ENCODE measurements at regions of chr17 and their contacts with region 1.

Region 1: GRCh38 chr17:49997791-49998703 is 3.0 kb upstream of the DLX3 start:
- DNase-seq: peak; percentile 89
- ATAC-seq: peak; percentile 85
- H3K4me3 Mint-ChIP-seq: no peak overlapping the region
- H3K27ac Mint-ChIP-seq: no peak overlapping the region
- H3K4me1 Mint-ChIP-seq: peaks cover 22% of the 10 kb centered on the region
- H3K27me3 Mint-ChIP-seq: peaks cover 71% of the 10 kb centered on the region
- CTCF ChIP-seq: peak; percentile 95

Region 2: GRCh38 chr17:49815761-49816281 is 182.2 kb before region 1 on chr17:
- CTCF ChIA-PET with region 1: interaction called, 11 read pairs
- POLR2A ChIA-PET with region 1: no interaction called
- intact Hi-C with region 1: no loop called
- DNase-seq: no peak
- ATAC-seq: no peak
- H3K4me3 Mint-ChIP-seq: no peak overlapping the region
- H3K27ac Mint-ChIP-seq: peak overlapping the region; percentile 75
- H3K4me1 Mint-ChIP-seq: peaks cover 62% of the 10 kb centered on the region
- H3K27me3 Mint-ChIP-seq: no peaks in the 10 kb centered on the region
- CTCF ChIP-seq: no peak

Region 3: GRCh38 chr17:49880291-49881053 is 117.6 kb before region 1 on chr17:
- CTCF ChIA-PET with region 1: interaction called, 145 read pairs
- POLR2A ChIA-PET with region 1: no interaction called
- intact Hi-C with region 1: loop called (anchors 5 kb)
- DNase-seq: peak; percentile 82
- ATAC-seq: peak; percentile 100
- H3K4me3 Mint-ChIP-seq: peak overlapping the region; percentile 24
- H3K27ac Mint-ChIP-seq: no peak overlapping the region
- H3K4me1 Mint-ChIP-seq: peaks cover 3% of the 10 kb centered on the region
- H3K27me3 Mint-ChIP-seq: peaks cover 32% of the 10 kb centered on the region
- CTCF ChIP-seq: peak; percentile 99

Region 4: DNA sequence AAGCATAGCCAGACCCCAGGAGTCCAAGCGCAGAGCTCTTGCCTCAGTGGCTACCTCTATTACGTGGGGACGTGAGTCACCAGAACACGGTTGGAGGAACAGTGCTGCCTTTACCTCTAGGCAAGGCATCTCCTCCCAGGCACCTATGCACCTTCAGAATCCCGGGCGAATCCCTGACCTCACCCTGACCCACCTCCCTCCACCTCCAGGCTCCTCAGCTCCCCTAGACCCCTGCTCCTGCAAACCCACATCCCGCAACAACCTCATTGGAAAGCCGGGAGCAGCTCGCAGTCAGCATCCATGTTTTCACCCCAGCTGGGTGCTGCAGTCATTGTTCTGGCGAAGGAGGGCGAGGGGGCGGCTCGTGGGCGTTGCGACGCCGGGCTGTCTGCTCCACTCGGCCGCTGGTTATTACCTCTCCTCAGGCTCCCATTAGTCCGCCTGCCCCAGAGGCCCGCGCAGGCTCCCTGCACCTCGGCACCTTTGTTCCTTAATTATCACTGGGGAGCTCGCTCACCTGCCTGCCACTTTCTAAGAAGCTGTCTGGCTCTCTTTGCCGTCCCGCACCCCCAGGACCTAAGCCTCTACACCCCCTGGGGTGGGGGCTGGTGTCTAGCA is 53.7 kb before region 1 on chr17:
- CTCF ChIA-PET with region 1: interaction called, 169 read pairs
- POLR2A ChIA-PET with region 1: no interaction called
- intact Hi-C with region 1: no loop called
- DNase-seq: no peak
- ATAC-seq: no peak
- H3K4me3 Mint-ChIP-seq: no peak overlapping the region
- H3K27ac Mint-ChIP-seq: no peak overlapping the region
- H3K4me1 Mint-ChIP-seq: no peaks in the 10 kb centered on the region
- H3K27me3 Mint-ChIP-seq: peaks cover 22% of the 10 kb centered on the region
- CTCF ChIP-seq: no peak

Region 5: GRCh38 chr17:49971848-49972485 is 26.1 kb before region 1 on chr17:
- CTCF ChIA-PET with region 1: interaction called, 140 read pairs
- POLR2A ChIA-PET with region 1: interaction called, 4 read pairs
- intact Hi-C with region 1: no loop called
- DNase-seq: peak; percentile 44
- ATAC-seq: no peak
- H3K4me3 Mint-ChIP-seq: no peak overlapping the region
- H3K27ac Mint-ChIP-seq: no peak overlapping the region
- H3K4me1 Mint-ChIP-seq: peaks cover 32% of the 10 kb centered on the region
- H3K27me3 Mint-ChIP-seq: peaks cover 61% of the 10 kb centered on the region
- CTCF ChIP-seq: no peak

Region 6: DNA sequence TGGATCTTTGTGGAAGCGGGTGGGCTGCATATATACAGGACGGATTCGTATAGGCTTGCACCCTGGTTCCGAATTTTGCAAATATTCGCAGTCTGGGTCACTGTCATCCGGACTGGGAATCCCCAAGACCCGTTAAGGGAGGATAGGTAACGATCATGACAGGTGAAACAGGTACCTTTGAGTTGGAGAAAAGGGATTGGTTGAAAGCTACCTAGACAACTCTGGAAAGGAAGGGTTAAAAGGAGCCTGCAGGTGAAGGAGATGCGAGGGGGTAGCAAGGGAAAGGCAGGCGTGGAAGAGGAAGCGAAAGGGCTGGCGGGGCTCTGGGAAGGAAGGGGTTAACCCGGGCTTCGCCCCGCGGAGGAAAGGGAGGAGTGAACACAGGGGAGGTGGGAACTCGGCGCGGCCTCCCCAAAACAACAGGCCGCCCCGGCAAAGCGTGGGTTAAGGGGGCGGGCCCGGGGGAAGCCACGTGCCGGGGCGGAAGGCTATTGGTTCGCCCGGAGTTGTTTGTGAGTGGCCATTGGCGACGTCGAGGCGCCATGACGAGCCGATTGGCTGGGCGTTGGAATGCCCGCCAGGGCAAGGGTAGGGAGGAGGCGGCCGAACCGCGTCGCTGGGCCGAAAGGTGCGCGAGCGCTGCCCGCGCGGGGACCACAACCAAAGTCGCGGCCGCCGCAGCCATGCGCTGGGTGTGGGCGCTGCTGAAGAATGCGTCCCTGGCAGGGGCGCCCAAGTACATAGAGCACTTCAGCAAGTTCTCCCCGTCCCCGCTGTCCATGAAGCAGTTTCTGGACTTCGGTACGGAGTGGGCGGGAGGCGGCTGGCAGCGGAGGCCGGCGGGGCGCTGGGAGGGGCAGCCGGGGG is 96.9 kb after region 1 on chr17 and contains the start of gene PDK2:
- CTCF ChIA-PET with region 1: interaction called, 53 read pairs
- POLR2A ChIA-PET with region 1: interaction called, 3 read pairs
- intact Hi-C with region 1: no loop called
- DNase-seq: peak; percentile 95
- ATAC-seq: peak; percentile 93
- H3K4me3 Mint-ChIP-seq: peak within 1 kb of the TSS; percentile 89
- H3K27ac Mint-ChIP-seq: peak within 1 kb of the TSS; percentile 90
- H3K4me1 Mint-ChIP-seq: peaks cover 26% of the 10 kb centered on the region
- H3K27me3 Mint-ChIP-seq: no peaks in the 10 kb centered on the region
- CTCF ChIP-seq: no peak
- total RNA-seq, gene PDK2: 6.0 to 7.7 TPM

Region 7: DNA sequence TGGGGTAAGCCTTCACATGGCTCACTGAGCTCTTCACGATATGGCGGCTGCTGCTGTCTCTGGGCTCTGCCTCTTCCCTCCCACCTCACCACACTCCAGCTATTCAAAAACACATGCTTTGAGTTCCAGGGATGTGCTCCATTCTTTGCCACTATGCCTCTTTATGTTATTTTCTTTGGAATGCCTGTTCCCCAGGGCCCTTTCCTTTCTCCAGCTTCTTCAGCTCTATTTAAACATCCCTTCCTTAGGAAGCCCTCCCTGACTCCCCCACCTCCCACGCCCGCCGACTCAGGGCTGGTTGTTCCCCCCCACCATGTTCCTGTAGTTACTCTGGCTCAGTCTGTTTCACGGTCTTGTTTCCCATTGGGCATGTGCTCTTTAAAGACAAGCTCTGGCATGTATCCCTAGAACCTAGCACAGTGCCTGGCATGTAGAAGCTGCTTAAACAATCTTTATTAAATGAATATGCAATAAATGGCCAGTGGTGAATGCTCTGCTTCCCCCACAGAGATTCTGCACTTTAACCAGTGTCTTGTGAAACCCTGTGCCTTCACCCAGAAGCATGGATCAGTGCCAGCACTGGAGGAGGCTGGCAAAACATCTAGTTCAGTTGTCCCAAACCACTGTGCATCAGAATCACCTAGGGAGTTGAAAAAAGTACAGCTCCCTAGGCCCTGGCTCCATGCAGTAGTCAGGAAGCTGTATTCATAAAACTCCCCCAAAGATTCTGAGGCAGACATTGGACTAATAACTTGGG is 517.1 kb after region 1 on chr17:
- CTCF ChIA-PET with region 1: no interaction called
- POLR2A ChIA-PET with region 1: no interaction called
- intact Hi-C with region 1: no loop called
- DNase-seq: no peak
- ATAC-seq: no peak
- H3K4me3 Mint-ChIP-seq: no peak overlapping the region
- H3K27ac Mint-ChIP-seq: no peak overlapping the region
- H3K4me1 Mint-ChIP-seq: peaks cover 19% of the 10 kb centered on the region
- H3K27me3 Mint-ChIP-seq: no peaks in the 10 kb centered on the region
- CTCF ChIP-seq: no peak

Measured in activated CD8-positive, alpha-beta T cell treated with anti-CD3 and anti-CD28 coated beads for 36 hours (primary cell).